Panc1 (cell line): ENCODE measurements at regions of chr18 and their contacts with region 1.

Region 1: GRCh38 chr18:3782901-3783300 is 332.9 kb downstream of the TGIF1 start:
- DNase-seq: no peak
- ATAC-seq: no peak
- H3K4me3 ChIP-seq: no peak overlapping the region
- H3K27ac ChIP-seq: no peak overlapping the region
- H3K4me1 ChIP-seq: no peaks in the 10 kb centered on the region
- H3K27me3 ChIP-seq: no peaks in the 10 kb centered on the region
- CTCF ChIP-seq: no peak

Region 2: GRCh38 chr18:3688699-3689098 is 94.2 kb before region 1 on chr18:
- CTCF ChIA-PET with region 1: no interaction called
- POLR2A ChIA-PET with region 1: no interaction called
- in situ Hi-C with region 1: no loop called
- intact Hi-C with region 1: no loop called
- DNase-seq: no peak
- ATAC-seq: peak; percentile 73
- H3K4me3 ChIP-seq: no peak overlapping the region
- H3K27ac ChIP-seq: peak overlapping the region; percentile 80
- H3K4me1 ChIP-seq: peaks cover 14% of the 10 kb centered on the region
- H3K27me3 ChIP-seq: no peaks in the 10 kb centered on the region
- CTCF ChIP-seq: no peak

Region 3: GRCh38 chr18:3796434-3796833 is 13.5 kb after region 1 on chr18:
- CTCF ChIA-PET with region 1: no interaction called
- POLR2A ChIA-PET with region 1: interaction called, 11 read pairs
- in situ Hi-C with region 1: no loop called
- intact Hi-C with region 1: no loop called
- DNase-seq: no peak
- ATAC-seq: no peak
- H3K4me3 ChIP-seq: no peak overlapping the region
- H3K27ac ChIP-seq: no peak overlapping the region
- H3K4me1 ChIP-seq: peaks cover 4% of the 10 kb centered on the region; the same call in 1 of the 2 replicates
- H3K27me3 ChIP-seq: no peaks in the 10 kb centered on the region
- CTCF ChIP-seq: no peak